Activated CD8-positive, alpha-beta T cell treated with anti-CD3 and anti-CD28 coated beads, Interleukin-2, amount 10 ng/mL, durations not matched to agents 7 days and 5 days (primary cell): ENCODE measurements at regions of chr11 and their contacts with region 1.

Region 1: GRCh38 chr11:11157185-11157584 is 195.9 kb downstream of the CSNK2A3 start:
- DNase-seq: peak; percentile 68
- ATAC-seq: peak; percentile 79
- H3K4me3 Mint-ChIP-seq: no peak overlapping the region
- H3K27ac Mint-ChIP-seq: no peak overlapping the region
- H3K4me1 Mint-ChIP-seq: peaks cover 19% of the 10 kb centered on the region
- H3K27me3 Mint-ChIP-seq: peaks cover 7% of the 10 kb centered on the region

Region 2: DNA sequence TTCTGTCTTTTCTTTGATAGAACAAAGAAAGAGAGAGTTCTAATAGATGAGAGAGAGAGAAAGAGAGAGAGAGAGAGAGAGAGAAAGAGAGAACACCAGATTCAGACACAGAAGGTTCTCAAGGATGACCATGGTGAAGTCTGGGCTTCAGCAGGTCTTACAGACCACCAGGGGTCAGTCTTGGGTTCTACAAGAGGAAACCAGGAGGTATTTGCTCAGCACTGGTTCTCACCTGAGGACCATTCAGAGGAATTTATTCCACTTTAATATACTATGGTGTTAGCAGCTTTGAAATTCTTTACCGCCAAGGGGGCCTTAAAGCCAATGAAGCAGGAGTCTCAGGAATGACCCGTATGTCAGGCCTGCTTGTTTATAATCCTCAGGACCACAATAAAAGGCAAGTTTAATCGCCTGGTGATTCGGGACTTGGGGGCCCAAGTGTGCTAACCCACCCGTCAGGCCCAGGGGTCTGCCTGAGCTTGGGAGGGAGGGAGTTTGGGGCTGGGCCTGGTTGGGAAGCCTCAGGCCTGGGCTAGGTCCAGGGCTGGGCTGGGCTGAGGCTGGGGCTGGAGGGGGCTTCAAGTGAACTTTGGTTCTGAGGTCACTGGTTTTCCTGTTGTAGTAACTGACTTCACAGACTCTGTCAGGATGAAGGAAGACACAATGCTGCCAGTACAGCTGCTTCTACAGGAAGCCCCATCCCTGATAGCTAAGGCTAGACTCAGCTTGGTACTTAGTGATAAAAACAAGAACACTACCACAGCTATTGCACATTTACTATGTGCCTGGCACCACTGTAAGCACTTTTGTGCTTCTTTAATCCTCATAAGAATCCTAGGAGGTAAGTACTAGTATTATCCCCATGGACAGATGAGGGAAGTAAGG is 120.1 kb before region 1 on chr11:
- CTCF ChIA-PET with region 1: interaction called, 75 read pairs
- POLR2A ChIA-PET with region 1: no interaction called
- DNase-seq: peak; percentile 58
- ATAC-seq: peak; percentile 84
- H3K4me3 Mint-ChIP-seq: no peak overlapping the region
- H3K27ac Mint-ChIP-seq: no peak overlapping the region
- H3K4me1 Mint-ChIP-seq: peaks cover 2% of the 10 kb centered on the region
- H3K27me3 Mint-ChIP-seq: peaks cover 3% of the 10 kb centered on the region

Region 3: DNA sequence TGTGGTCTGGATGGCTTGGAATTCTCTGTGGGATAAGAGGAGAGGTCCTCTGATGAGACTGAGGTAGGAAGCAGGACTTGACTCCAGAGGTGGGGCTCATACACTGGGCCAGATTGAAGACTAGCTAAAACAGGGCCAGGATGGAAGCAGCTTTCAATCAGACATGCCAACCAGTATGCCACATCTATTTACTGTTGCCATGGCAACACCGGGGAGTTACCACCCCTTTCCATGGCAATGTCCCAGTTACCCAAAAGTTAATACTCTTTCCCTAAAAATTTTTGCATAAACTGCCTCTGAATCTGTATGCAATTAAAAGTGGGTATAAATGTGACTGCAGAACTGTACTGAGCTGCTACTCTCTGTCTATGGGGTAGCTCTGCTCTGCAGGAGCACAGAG is 51.8 kb before region 1 on chr11:
- CTCF ChIA-PET with region 1: interaction called, 11 read pairs
- POLR2A ChIA-PET with region 1: no interaction called
- DNase-seq: no peak
- ATAC-seq: no peak
- H3K4me3 Mint-ChIP-seq: no peak overlapping the region
- H3K27ac Mint-ChIP-seq: no peak overlapping the region
- H3K4me1 Mint-ChIP-seq: no peaks in the 10 kb centered on the region
- H3K27me3 Mint-ChIP-seq: peaks cover 2% of the 10 kb centered on the region

Region 4: DNA sequence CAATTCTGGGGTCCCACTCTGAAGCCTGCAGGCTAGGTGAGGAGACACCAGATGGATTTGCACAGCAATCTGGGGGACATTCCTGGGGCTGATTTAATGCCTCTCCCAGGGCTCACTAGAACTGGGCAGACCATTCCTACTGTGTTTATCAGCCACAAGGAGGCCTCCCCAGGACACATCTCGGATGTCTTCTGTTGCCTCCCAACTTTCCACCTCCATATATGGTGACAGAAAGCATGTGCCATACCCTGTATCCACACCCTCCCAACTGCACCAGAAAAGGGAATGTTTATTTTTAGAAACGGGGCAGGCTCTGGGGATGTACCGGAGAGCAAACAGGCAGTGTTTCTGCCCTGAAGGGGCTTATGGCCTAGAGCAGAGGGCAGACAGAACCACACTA is 14.1 kb after region 1 on chr11:
- CTCF ChIA-PET with region 1: interaction called, 10 read pairs
- POLR2A ChIA-PET with region 1: no interaction called
- DNase-seq: no peak
- ATAC-seq: no peak
- H3K4me3 Mint-ChIP-seq: no peak overlapping the region
- H3K27ac Mint-ChIP-seq: no peak overlapping the region
- H3K4me1 Mint-ChIP-seq: peaks cover 13% of the 10 kb centered on the region
- H3K27me3 Mint-ChIP-seq: peaks cover 3% of the 10 kb centered on the region